WTC11 (cell line): ENCODE measurements at regions of chr11 and their contacts with region 1.

Region 1: GRCh38 chr11:17598700-17599459 is 51.8 kb downstream of the OTOG start:
- DNase-seq: peak; percentile 94
- ATAC-seq: peak; percentile 95
- H3K4me3 Mint-ChIP-seq: no peak overlapping the region
- H3K27ac Mint-ChIP-seq: no peak overlapping the region
- H3K4me1 Mint-ChIP-seq: peaks cover 6% of the 10 kb centered on the region
- H3K27me3 Mint-ChIP-seq: peaks cover 7% of the 10 kb centered on the region
- CTCF ChIP-seq: peak; percentile 95

Region 2: DNA sequence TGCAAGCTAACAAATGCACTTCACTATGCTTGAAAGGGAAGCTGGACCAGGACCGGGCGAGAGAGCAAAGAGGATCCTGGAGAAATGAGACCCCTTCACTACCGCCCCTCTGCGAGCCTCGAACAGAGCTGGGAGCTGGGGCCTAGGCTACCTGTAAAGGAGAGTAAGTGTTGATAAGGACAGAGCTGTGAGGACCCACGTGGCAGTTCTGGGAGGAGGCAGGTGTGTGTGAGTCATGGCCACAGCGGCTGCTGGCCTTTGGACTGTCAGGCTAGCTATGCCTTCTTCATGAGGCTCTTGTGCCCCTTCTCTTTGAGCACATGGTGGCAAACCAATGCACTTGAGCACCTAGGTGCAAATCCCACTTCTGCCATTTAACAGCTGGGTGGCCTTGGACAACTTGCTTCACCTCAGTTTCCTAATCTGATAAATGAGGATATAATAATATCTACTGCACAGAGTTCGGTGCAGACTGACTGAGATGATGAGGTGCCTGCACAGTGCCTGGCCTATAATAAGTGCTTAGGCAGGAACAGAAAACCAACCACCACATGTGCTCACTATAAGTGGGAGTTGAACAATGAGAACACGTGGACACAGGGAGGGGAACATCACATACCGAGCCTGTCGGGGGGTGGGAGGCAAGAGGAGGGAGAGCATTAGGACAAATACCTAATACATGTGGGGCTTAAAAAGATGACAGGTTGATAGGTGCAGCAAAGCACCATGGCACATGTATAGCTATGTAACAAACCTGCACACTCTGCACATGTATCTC is 175.2 kb before region 1 on chr11:
- CTCF ChIA-PET with region 1: no interaction called
- POLR2A ChIA-PET with region 1: no interaction called
- DNase-seq: no peak
- ATAC-seq: no peak
- H3K4me3 Mint-ChIP-seq: no peak overlapping the region
- H3K27ac Mint-ChIP-seq: no peak overlapping the region
- H3K4me1 Mint-ChIP-seq: peaks cover 19% of the 10 kb centered on the region
- H3K27me3 Mint-ChIP-seq: no peaks in the 10 kb centered on the region; the same call in 1 of the 2 replicates
- CTCF ChIP-seq: no peak

Region 3: GRCh38 chr11:17563248-17563647 is 35.6 kb before region 1 on chr11:
- CTCF ChIA-PET with region 1: interaction called, 14 read pairs
- POLR2A ChIA-PET with region 1: no interaction called
- DNase-seq: peak; percentile 25
- ATAC-seq: peak; percentile 92
- H3K4me3 Mint-ChIP-seq: no peak overlapping the region
- H3K27ac Mint-ChIP-seq: no peak overlapping the region
- H3K4me1 Mint-ChIP-seq: no peaks in the 10 kb centered on the region
- H3K27me3 Mint-ChIP-seq: no peaks in the 10 kb centered on the region
- CTCF ChIP-seq: no peak

Region 4: GRCh38 chr11:17610085-17610894 is 11.4 kb after region 1 on chr11:
- CTCF ChIA-PET with region 1: interaction called, 14 read pairs
- POLR2A ChIA-PET with region 1: no interaction called
- DNase-seq: no peak
- ATAC-seq: no peak
- H3K4me3 Mint-ChIP-seq: no peak overlapping the region
- H3K27ac Mint-ChIP-seq: no peak overlapping the region
- H3K4me1 Mint-ChIP-seq: peaks cover 6% of the 10 kb centered on the region; the same call in 1 of the 2 replicates
- H3K27me3 Mint-ChIP-seq: no peaks in the 10 kb centered on the region; the same call in none of the 2 replicates
- CTCF ChIP-seq: no peak

Region 5: GRCh38 chr11:17635551-17635938 is 36.7 kb after region 1 on chr11:
- CTCF ChIA-PET with region 1: interaction called, 14 read pairs
- POLR2A ChIA-PET with region 1: no interaction called
- DNase-seq: peak; percentile 54
- ATAC-seq: peak; percentile 46
- H3K4me3 Mint-ChIP-seq: no peak overlapping the region
- H3K27ac Mint-ChIP-seq: no peak overlapping the region
- H3K4me1 Mint-ChIP-seq: no peaks in the 10 kb centered on the region
- H3K27me3 Mint-ChIP-seq: no peaks in the 10 kb centered on the region; the same call in 1 of the 2 replicates
- CTCF ChIP-seq: peak; percentile 54

Region 6: DNA sequence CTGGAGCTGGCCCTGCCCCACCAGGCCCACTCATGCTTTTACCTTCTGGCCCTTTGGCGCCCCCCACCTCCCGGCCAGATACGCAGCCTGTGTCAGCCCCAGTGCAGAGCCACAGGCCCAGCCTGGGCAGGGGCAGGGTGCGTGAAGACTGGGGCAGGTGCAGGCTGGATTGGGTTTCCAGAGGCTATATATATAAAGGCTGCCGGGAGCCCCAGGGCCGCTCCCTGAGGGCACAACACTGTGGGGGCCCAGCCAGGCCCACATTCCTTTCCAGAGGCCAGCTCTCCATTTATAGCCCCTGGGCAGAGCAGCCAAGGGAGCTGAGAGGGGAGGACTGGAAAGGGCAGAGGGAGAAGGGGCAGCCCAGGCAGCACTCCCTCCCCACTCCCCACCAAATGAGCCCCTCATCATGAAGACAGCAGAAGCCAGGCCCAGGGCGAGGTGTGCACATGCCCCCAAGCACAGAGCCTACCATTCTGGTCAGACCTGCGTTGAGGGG is 115.5 kb after region 1 on chr11:
- CTCF ChIA-PET with region 1: interaction called, 108 read pairs
- POLR2A ChIA-PET with region 1: no interaction called
- DNase-seq: peak; percentile 55
- ATAC-seq: peak; percentile 68
- H3K4me3 Mint-ChIP-seq: no peak overlapping the region
- H3K27ac Mint-ChIP-seq: no peak overlapping the region
- H3K4me1 Mint-ChIP-seq: peaks cover 11% of the 10 kb centered on the region
- H3K27me3 Mint-ChIP-seq: peaks cover 6% of the 10 kb centered on the region
- CTCF ChIP-seq: no peak

Region 7: DNA sequence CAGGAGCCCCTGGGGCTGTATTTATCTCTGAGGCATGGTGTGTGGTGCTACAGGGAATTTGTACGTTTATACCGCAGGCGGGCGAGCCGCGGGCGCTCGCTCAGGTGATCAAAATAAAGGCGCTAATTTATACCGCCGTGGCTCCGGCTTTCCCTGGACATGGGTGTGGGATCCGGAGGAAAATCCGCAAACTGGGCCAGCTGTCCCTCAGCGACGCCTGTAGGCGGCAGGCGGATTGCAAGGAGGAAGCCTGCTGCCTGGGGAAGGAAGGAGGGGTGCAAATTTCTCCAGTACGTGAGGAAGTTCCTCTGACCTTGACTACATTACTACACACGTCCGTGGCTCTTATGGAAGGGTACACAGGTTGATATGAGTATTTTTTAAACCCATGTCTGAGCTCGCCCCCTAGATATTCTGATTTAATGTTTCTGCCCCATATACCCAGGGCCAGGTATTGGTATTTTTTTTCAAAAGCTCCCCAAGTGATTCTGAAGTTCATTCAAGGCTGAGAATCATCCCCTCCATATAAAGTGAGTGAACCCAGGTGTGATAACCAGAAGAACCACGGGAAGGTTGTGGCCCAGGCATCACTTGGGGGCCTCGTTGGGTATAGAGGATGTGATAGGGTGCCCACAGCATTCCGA is 123.2 kb after region 1 on chr11:
- CTCF ChIA-PET with region 1: interaction called, 108 read pairs
- POLR2A ChIA-PET with region 1: no interaction called
- DNase-seq: peak; percentile 75
- ATAC-seq: peak; percentile 12
- H3K4me3 Mint-ChIP-seq: peak overlapping the region; percentile 58
- H3K27ac Mint-ChIP-seq: no peak overlapping the region
- H3K4me1 Mint-ChIP-seq: peaks cover 11% of the 10 kb centered on the region
- H3K27me3 Mint-ChIP-seq: peaks cover 18% of the 10 kb centered on the region
- CTCF ChIP-seq: no peak

Region 8: DNA sequence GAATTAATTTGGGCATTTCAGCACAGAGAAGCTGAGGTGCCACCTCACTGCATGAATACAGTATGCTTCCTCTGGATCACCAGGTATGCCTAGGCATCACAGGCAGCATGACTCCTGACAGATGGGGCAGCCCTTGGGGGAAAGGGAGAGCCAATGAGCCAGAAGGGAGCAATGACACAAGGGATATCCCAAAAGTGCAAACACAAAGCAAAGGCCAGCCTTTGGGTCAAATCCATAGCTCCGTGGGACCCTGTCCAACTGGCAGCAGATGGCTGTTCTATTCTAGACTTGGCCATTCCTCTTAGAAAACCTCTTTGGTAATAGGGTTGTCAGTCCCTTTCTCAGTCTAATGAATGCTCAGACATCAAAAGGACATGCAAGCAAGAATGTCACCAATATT is 340.7 kb after region 1 on chr11:
- CTCF ChIA-PET with region 1: no interaction called
- POLR2A ChIA-PET with region 1: no interaction called
- DNase-seq: no peak
- ATAC-seq: no peak
- H3K4me3 Mint-ChIP-seq: no peak overlapping the region
- H3K27ac Mint-ChIP-seq: no peak overlapping the region
- H3K4me1 Mint-ChIP-seq: peaks cover 3% of the 10 kb centered on the region; the same call in 1 of the 2 replicates
- H3K27me3 Mint-ChIP-seq: no peaks in the 10 kb centered on the region
- CTCF ChIP-seq: no peak